Activated CD8-positive, alpha-beta T cell treated with anti-CD3 and anti-CD28 coated beads for 36 hours (primary cell): ENCODE measurements at regions of chr9 and their contacts with region 1.

Region 1: DNA sequence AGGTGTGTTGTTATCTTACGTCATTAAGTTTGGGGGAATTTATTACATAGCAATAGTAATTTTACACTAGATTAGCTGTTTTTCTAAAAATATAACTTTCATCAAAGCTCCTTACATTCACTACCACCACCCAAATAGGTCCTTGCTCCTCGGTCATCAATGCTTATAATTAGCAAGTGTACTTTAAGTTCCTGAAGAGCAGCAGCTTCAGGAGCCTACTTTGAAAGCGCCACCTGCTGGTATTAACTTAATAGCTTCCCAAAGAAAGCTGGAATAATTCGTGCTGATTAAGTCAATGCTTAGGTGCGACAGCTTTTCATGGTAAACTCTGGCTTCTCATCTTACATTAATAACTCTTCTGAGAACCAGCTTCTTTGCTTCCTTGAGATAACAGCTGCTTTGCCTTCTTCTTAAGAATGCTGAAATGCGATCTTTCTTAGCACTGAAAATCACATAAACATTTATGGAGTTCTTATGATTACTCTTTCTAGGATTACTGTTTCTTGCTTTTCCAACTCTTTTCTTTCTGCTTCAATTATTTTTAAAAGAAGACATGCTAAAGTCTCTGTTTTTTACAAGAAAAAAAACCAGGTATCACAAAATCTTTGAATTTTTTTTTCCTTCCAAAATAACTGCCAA is 10.0 kb upstream of the C5 start:
- DNase-seq: peak; percentile 26
- ATAC-seq: no peak
- H3K4me3 Mint-ChIP-seq: no peak overlapping the region
- H3K27ac Mint-ChIP-seq: no peak overlapping the region
- H3K4me1 Mint-ChIP-seq: peaks cover 19% of the 10 kb centered on the region
- H3K27me3 Mint-ChIP-seq: no peaks in the 10 kb centered on the region
- CTCF ChIP-seq: peak; percentile 77

Region 2: DNA sequence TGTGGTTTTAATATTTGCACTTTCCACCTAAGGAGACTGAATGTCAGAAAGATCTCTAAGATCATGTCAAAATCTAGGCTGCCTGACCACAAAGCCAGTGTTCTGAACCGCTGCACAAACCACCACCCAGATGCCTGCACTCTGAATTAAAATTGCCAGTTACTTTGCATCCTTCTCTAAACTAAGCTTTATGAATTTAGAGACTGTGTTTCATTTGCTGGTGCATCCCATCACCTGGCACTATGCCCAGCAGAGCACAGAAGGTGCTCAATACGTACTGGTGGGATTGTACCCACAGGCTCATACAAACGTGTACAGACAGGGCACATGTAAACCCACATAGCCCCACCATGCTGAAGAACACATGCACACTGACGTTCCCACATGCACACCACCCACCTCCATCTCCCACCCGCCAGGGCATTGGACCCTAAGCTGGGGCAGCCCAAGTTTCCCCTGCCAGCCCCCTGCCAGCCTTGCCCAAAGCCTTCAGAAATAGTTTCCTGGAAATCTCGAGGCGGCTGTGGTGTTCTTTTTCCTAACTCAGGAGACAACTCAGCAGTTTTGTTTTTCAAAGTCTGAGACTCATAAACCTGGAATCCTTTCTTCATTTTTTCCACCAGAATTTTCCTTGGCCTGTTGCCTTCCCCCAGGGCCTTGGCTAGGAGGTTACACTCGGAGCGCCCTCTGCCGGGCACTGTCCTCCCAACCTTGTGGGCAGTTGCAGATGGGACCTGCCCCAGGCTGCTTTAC is 123.9 kb before region 1 on chr9:
- CTCF ChIA-PET with region 1: interaction called, 17 read pairs
- POLR2A ChIA-PET with region 1: interaction called, 3 read pairs
- intact Hi-C with region 1: no loop called
- DNase-seq: peak; percentile 96
- ATAC-seq: peak; percentile 63
- H3K4me3 Mint-ChIP-seq: peak overlapping the region; percentile 57
- H3K27ac Mint-ChIP-seq: peak overlapping the region; percentile 100
- H3K4me1 Mint-ChIP-seq: peaks cover 63% of the 10 kb centered on the region
- H3K27me3 Mint-ChIP-seq: no peaks in the 10 kb centered on the region
- CTCF ChIP-seq: peak; percentile 98

Region 3: DNA sequence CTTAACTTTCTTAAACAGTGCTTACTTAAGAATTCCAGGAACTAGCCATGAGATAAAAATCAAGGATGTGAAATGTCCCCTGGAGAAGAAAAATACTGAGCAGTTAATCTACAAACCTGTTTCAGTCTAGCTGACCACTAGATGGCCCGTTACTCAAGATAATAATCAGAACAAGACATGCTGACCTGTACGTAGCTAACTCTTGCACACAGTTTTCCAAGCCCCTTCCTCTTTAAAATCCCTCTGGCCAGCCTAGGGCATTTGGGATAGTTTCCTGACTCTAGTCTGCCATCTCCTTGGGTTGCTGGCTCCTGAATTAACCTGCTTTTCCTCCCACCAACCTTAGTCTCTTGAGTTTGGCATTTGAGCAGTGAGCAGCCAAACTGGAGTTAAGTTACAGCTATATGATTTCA is 74.3 kb before region 1 on chr9:
- CTCF ChIA-PET with region 1: interaction called, 56 read pairs
- POLR2A ChIA-PET with region 1: no interaction called
- intact Hi-C with region 1: no loop called
- DNase-seq: no peak
- ATAC-seq: no peak
- H3K4me3 Mint-ChIP-seq: no peak overlapping the region
- H3K27ac Mint-ChIP-seq: no peak overlapping the region
- H3K4me1 Mint-ChIP-seq: peaks cover 4% of the 10 kb centered on the region
- H3K27me3 Mint-ChIP-seq: no peaks in the 10 kb centered on the region
- CTCF ChIP-seq: peak; percentile 26

Region 4: GRCh38 chr9:120998111-120998510 is 62.0 kb before region 1 on chr9:
- CTCF ChIA-PET with region 1: interaction called, 11 read pairs
- POLR2A ChIA-PET with region 1: no interaction called
- intact Hi-C with region 1: no loop called
- DNase-seq: no peak
- ATAC-seq: no peak
- H3K4me3 Mint-ChIP-seq: no peak overlapping the region
- H3K27ac Mint-ChIP-seq: no peak overlapping the region
- H3K4me1 Mint-ChIP-seq: no peaks in the 10 kb centered on the region
- H3K27me3 Mint-ChIP-seq: no peaks in the 10 kb centered on the region
- CTCF ChIP-seq: no peak

Region 5: GRCh38 chr9:121021301-121021700 is 38.8 kb before region 1 on chr9:
- CTCF ChIA-PET with region 1: interaction called, 10 read pairs
- POLR2A ChIA-PET with region 1: no interaction called
- intact Hi-C with region 1: no loop called
- DNase-seq: no peak
- ATAC-seq: no peak
- H3K4me3 Mint-ChIP-seq: no peak overlapping the region
- H3K27ac Mint-ChIP-seq: no peak overlapping the region
- H3K4me1 Mint-ChIP-seq: no peaks in the 10 kb centered on the region
- H3K27me3 Mint-ChIP-seq: no peaks in the 10 kb centered on the region
- CTCF ChIP-seq: no peak

Region 6: GRCh38 chr9:121048618-121049017 is 11.5 kb before region 1 on chr9:
- CTCF ChIA-PET with region 1: interaction called, 40 read pairs
- POLR2A ChIA-PET with region 1: no interaction called
- intact Hi-C with region 1: no loop called
- DNase-seq: no peak
- ATAC-seq: no peak
- H3K4me3 Mint-ChIP-seq: no peak overlapping the region
- H3K27ac Mint-ChIP-seq: no peak overlapping the region
- H3K4me1 Mint-ChIP-seq: no peaks in the 10 kb centered on the region
- H3K27me3 Mint-ChIP-seq: no peaks in the 10 kb centered on the region
- CTCF ChIP-seq: no peak

Region 7: DNA sequence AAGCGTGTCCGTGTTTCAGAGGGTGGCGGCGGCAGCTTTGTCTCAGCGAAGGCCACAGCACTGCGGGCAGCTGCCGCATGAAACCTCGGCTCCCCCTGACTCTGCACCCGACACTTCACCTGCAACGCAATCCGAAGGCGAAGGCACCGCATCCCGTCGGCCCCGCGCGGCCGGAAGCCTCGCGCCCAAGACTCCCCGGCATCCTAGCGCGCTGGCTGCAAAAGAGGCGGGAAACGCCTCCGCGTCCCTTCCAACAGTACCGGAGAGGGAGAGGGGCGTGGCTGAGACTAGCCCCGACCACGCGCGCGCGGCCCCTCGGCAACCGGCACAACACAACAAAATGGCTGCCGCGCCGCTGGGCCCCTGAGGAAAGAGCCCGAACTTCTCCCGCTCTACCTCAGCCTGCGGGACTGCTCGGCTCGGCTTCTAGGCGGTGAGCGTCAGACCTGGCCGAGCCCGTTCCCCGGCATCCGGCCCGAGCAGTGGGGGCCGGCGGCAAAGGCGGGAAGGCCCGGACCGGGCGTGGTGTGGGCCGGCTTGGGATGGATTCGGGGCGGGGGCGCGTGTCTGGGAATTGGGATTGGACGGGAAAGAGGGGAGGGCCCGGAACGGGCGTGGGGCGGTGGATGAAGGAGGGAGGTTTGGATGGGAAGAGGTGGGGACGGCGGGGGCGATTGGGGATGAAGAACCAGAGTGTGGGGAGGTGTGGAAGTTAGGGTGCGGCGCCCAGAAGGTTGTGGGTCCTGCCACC is 14.7 kb after region 1 on chr9 and contains the start of gene CNTRL:
- CTCF ChIA-PET with region 1: interaction called, 41 read pairs
- POLR2A ChIA-PET with region 1: interaction called, 5 read pairs
- intact Hi-C with region 1: no loop called
- DNase-seq: peak; percentile 98
- ATAC-seq: peak; percentile 91
- H3K4me3 Mint-ChIP-seq: peak within 1 kb of the TSS; percentile 97
- H3K27ac Mint-ChIP-seq: peak within 1 kb of the TSS; percentile 97
- H3K4me1 Mint-ChIP-seq: peaks cover 38% of the 10 kb centered on the region
- H3K27me3 Mint-ChIP-seq: no peaks in the 10 kb centered on the region
- CTCF ChIP-seq: no peak
- total RNA-seq, gene CNTRL: 62.8 to 69.8 TPM